ENCODE measurements at regions of chr9 and their contacts with region 1.

Region 1: GRCh38 chr9:134443168-134444037 is 117.1 kb downstream of the RXRA start:
- DNase-seq: peak; percentile 83
- ATAC-seq: peak; percentile 94
- H3K4me3 ChIP-seq: no peak overlapping the region
- H3K27ac ChIP-seq: peak overlapping the region; percentile 13; the same call in 1 of the 2 replicates
- H3K4me1 ChIP-seq: peaks cover 6 to 8% of the 10 kb centered on the region in 2 experiments; a peak in 3 of 4 replicates
- H3K27me3 ChIP-seq: no peaks in the 10 kb centered on the region
- CTCF ChIP-seq: peak; percentile 94 to 97 (median 97)
- POLR2A ChIP-seq: no peak
- RAD21 ChIP-seq: peak; percentile 100

Region 2: GRCh38 chr9:134168757-134169550 is 274.4 kb before region 1 on chr9:
- CTCF ChIA-PET with region 1: interaction called, 29 read pairs
- POLR2A ChIA-PET with region 1: no interaction called
- RAD21 ChIA-PET with region 1: interaction called, 8 to 10 read pairs
- intact Hi-C with region 1: loop called (anchors 1 kb)
- DNase-seq: no peak
- ATAC-seq: no peak
- H3K4me3 ChIP-seq: no peak overlapping the region
- H3K27ac ChIP-seq: no peak overlapping the region
- H3K4me1 ChIP-seq: peaks cover 0 to 9% of the 10 kb centered on the region in 2 experiments; a peak in 3 of 4 replicates
- H3K27me3 ChIP-seq: no peaks in the 10 kb centered on the region
- CTCF ChIP-seq: peak in 2 of 3 experiments; percentile 43 to 58; a peak in 3 of 6 replicates
- POLR2A ChIP-seq: no peak
- RAD21 ChIP-seq: no peak

Region 3: DNA sequence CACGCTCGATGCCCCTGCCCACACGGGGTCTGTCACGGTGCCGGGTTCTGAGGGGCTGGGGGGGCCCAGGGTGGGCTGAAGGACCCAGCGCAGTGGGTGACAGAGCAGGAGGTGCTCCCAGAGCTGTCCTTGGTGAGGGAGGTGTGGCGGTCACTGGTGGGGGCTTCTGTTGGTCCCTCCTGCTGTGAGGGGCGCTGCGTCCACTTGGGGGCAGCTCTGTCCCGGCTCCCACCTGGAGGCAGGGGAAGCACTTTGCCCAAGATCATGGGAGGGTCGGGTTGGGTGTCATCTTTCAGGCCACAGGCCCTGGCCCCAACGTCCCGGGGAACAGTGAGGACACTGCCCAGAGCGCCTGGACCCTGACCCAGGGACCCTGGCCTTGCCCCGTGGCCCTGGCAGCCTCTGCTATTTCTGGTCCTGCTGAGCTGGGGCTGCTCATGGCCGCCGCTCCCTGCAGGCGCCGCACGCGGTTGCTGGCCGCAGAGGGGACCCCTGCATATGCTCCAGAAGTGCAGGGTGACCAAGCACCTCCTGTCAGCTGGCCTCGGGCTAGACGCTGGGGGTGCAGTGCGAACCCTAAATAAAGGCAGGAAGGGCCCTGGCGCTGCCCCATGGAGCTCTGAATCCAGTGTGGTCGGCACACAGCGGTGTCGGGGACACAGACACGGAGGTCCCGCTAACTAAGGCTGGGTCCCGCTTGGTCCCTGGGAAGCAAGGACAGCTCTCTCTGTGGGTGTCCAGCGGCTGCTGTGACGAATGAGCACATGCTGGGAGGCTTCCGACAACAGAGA is 267.4 kb before region 1 on chr9:
- CTCF ChIA-PET with region 1: interaction called, 29 read pairs
- POLR2A ChIA-PET with region 1: no interaction called
- RAD21 ChIA-PET with region 1: interaction called, 8 to 10 read pairs
- intact Hi-C with region 1: no loop called
- DNase-seq: no peak
- ATAC-seq: no peak
- H3K4me3 ChIP-seq: no peak overlapping the region
- H3K27ac ChIP-seq: no peak overlapping the region; the same call in 1 of the 2 replicates
- H3K4me1 ChIP-seq: peaks cover 8 to 11% of the 10 kb centered on the region in 2 experiments
- H3K27me3 ChIP-seq: no peaks in the 10 kb centered on the region
- CTCF ChIP-seq: no peak
- POLR2A ChIP-seq: no peak
- RAD21 ChIP-seq: no peak

Region 4: DNA sequence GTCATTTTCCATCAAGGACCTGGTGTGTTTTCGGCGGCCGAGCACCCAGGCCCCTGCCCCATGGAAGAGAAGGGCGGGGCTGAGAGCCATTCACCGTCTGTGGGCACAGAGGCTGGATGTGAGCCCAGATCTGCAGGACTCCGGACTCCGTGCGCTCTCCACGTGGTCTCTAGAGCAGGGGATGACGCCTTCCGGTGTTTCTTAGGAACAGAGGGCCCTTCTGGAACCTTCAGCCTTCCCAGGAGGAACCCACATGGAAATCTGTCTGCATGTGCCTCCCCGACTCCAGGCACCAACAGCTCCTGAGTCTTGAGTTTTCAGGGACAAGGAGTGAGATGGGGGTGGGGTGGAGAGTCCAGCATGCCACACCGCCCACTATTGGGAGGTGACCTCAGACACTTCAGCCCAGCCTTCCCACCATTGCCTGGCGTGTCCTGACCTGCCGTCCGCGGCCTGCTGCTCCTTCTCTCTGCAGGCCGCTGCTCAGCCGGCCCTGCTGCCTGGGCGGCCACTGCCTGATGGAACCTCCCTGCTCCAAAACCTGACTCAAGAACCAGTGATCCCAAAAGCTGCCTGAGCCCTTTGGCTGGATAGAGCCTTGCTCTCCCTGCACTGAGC is 119.6 kb before region 1 on chr9:
- CTCF ChIA-PET with region 1: no interaction called
- POLR2A ChIA-PET with region 1: no interaction called
- RAD21 ChIA-PET with region 1: no interaction called
- intact Hi-C with region 1: loop called (anchors 5 kb)
- DNase-seq: peak; percentile 51
- ATAC-seq: peak; percentile 37
- H3K4me3 ChIP-seq: peak overlapping the region; percentile 9 to 80; a peak in 3 of 4 replicates
- H3K27ac ChIP-seq: peak overlapping the region; percentile 99
- H3K4me1 ChIP-seq: peaks cover 28 to 46% of the 10 kb centered on the region in 2 experiments
- H3K27me3 ChIP-seq: no peaks in the 10 kb centered on the region
- CTCF ChIP-seq: no peak
- POLR2A ChIP-seq: no peak
- RAD21 ChIP-seq: no peak

Region 5: GRCh38 chr9:134344068-134344799 is 99.2 kb before region 1 on chr9:
- CTCF ChIA-PET with region 1: no interaction called
- POLR2A ChIA-PET with region 1: no interaction called
- RAD21 ChIA-PET with region 1: no interaction called
- intact Hi-C with region 1: no loop called
- DNase-seq: no peak
- ATAC-seq: peak; percentile 43; the same call in 1 of the 2 replicates
- H3K4me3 ChIP-seq: no peak overlapping the region
- H3K27ac ChIP-seq: no peak overlapping the region
- H3K4me1 ChIP-seq: peaks cover 0 to 11% of the 10 kb centered on the region in 2 experiments; a peak in 1 of 4 replicates
- H3K27me3 ChIP-seq: no peaks in the 10 kb centered on the region
- CTCF ChIP-seq: 0 out of 6 replicates have a peak, but pooled peaks of 2 of the 3 experiments have one; percentile 2 to 16
- POLR2A ChIP-seq: no peak
- RAD21 ChIP-seq: no peak

Region 6: DNA sequence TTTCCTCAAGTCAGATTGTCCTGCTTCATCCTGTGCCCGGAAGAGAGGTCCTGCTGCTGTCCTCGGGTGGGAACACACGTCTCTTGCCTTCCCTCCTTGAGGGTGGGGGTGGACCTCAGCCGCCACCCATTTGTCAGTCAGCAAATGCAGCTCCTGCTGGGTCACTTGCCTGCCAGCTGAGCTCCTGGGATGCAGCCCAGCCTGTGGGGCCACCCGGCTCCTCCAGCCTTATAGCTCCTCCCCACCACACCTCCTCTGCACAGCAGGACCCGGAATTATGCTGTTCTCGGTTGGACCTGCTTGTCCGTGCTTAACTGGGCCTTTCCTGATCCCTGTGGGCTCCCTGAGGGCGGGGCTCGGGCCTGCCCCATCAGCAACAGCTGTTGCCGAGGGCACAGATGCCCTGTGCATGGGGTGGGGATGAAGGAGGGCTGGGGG is 64.5 kb before region 1 on chr9:
- CTCF ChIA-PET with region 1: interaction called, 7 read pairs
- POLR2A ChIA-PET with region 1: no interaction called
- RAD21 ChIA-PET with region 1: interaction called in 1 of 2 experiments, 3 read pairs
- intact Hi-C with region 1: loop called (anchors 2 kb)
- DNase-seq: peak; percentile 37
- ATAC-seq: peak; percentile 70
- H3K4me3 ChIP-seq: peak overlapping the region; percentile 16 to 56
- H3K27ac ChIP-seq: peak overlapping the region; percentile 96
- H3K4me1 ChIP-seq: peaks cover 61 to 95% of the 10 kb centered on the region in 2 experiments
- H3K27me3 ChIP-seq: no peaks in the 10 kb centered on the region
- CTCF ChIP-seq: no peak
- POLR2A ChIP-seq: no peak
- RAD21 ChIP-seq: no peak

Measured in HCT116 (cell line).